ENCODE measurements at regions of chr7 and their contacts with region 1.

Region 1: GRCh38 chr7:107661081-107661864 is 645 bp downstream of the SLC26A4 start:
- DNase-seq: peak in 7 of 9 donors; percentile 12 to 60 (median 14)
- ATAC-seq: peak; percentile 66
- H3K4me3 ChIP-seq: peak overlapping the region; percentile 30
- H3K4me3 Mint-ChIP-seq: peak overlapping the region; percentile 56 to 96 (median 84)
- H3K27ac ChIP-seq: no peak overlapping the region
- H3K27ac Mint-ChIP-seq: peak overlapping the region in 1 of 9 donors; percentile 87
- H3K4me1 ChIP-seq: peaks cover 0 to 2% of the 10 kb centered on the region in 2 donors
- H3K4me1 Mint-ChIP-seq: peaks cover 12 to 44% (median 21%) of the 10 kb centered on the region in 7 donors
- H3K27me3 ChIP-seq: peaks cover 3 to 19% of the 10 kb centered on the region in 2 donors
- H3K27me3 Mint-ChIP-seq: peaks cover 0 to 67% (median 49%) of the 10 kb centered on the region in 5 donors

Region 2: DNA sequence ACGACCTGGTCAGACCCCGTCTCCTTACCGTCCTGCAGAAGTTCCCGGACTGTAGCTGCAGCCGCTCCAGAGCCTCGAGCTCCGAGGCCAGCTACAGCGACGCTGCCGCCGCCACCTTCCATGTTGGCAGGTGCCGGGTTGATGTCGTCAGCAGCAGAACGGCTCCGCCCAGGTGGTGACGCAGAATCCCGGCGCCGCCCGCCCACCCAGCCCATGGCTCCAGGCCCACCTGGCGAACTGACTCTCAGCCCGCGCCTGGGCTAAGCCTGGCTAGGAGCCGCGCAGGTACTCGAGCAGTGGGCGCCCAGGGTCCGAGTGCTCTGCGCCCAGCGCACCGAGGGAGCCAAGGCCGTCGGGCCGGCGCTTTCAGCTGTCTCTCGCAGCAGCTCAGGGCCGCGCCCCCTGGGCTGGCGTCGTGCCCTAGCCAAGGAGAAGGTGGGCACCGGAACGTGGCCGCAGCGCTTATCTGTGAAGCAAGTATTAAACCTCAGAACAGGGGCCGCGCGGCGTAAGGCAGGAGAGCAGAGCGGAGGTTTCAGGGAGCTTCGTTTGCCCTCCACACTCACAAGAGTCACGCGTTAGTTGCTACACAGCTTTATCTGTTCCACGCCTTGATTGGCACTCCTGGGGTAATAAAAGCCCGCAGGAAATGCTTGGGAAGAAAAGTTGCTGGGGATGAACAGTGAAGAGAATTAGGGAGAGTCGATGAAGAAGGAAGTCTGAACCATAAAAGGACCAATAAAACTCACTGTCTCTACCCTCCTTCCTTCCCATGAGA is 97.3 kb before region 1 on chr7 and contains the starts of genes COG5 and DUS4L:
- CTCF ChIA-PET with region 1: no interaction called
- POLR2A ChIA-PET with region 1: interaction called, 3 read pairs
- intact Hi-C with region 1: loop called in 1 of 2 experiments (anchors 1 kb)
- DNase-seq: peak; percentile 78 to 88 (median 84)
- ATAC-seq: peak; percentile 91
- H3K4me3 ChIP-seq: peak within 1 kb of the TSS; percentile 86
- H3K4me3 Mint-ChIP-seq: peak within 1 kb of the TSS; percentile 76 to 99 (median 91)
- H3K27ac ChIP-seq: peak within 1 kb of the TSS; percentile 98
- H3K27ac Mint-ChIP-seq: peak within 1 kb of the TSS; percentile 87 to 97 (median 93)
- H3K4me1 ChIP-seq: peaks cover 40 to 50% of the 10 kb centered on the region in 2 donors
- H3K4me1 Mint-ChIP-seq: peaks cover 40 to 76% (median 62%) of the 10 kb centered on the region in 7 donors
- H3K27me3 ChIP-seq: no peaks in the 10 kb centered on the region
- H3K27me3 Mint-ChIP-seq: no peaks in the 10 kb centered on the region
- total RNA-seq, gene COG5: 38.3 to 77.0 (median 60.7) TPM
- total RNA-seq, gene DUS4L: 10.0 to 14.1 (median 11.2) TPM

Region 3: GRCh38 chr7:107614425-107614824 is 46.8 kb before region 1 on chr7:
- CTCF ChIA-PET with region 1: no interaction called
- POLR2A ChIA-PET with region 1: no interaction called
- intact Hi-C with region 1: loop called in 1 of 2 experiments (anchors 2 kb)
- DNase-seq: no peak
- ATAC-seq: no peak
- H3K4me3 ChIP-seq: no peak overlapping the region
- H3K4me3 Mint-ChIP-seq: peak overlapping the region in 1 of 10 donors; percentile 69
- H3K27ac ChIP-seq: no peak overlapping the region
- H3K27ac Mint-ChIP-seq: no peak overlapping the region
- H3K4me1 ChIP-seq: no peaks in the 10 kb centered on the region
- H3K4me1 Mint-ChIP-seq: peaks cover 0 to 26% (median 0%) of the 10 kb centered on the region in 7 donors
- H3K27me3 ChIP-seq: no peaks in the 10 kb centered on the region
- H3K27me3 Mint-ChIP-seq: no peaks in the 10 kb centered on the region

Region 4: GRCh38 chr7:107638594-107638993 is 22.7 kb before region 1 on chr7:
- CTCF ChIA-PET with region 1: no interaction called
- POLR2A ChIA-PET with region 1: no interaction called
- intact Hi-C with region 1: loop called in 1 of 2 experiments (anchors 1 kb)
- DNase-seq: no peak
- ATAC-seq: no peak
- H3K4me3 ChIP-seq: no peak overlapping the region
- H3K4me3 Mint-ChIP-seq: peak overlapping the region in 1 of 10 donors; percentile 52
- H3K27ac ChIP-seq: no peak overlapping the region
- H3K27ac Mint-ChIP-seq: peak overlapping the region in 1 of 9 donors; percentile 45
- H3K4me1 ChIP-seq: no peaks in the 10 kb centered on the region
- H3K4me1 Mint-ChIP-seq: peaks cover 0 to 56% (median 0%) of the 10 kb centered on the region in 7 donors
- H3K27me3 ChIP-seq: no peaks in the 10 kb centered on the region
- H3K27me3 Mint-ChIP-seq: peaks cover 0 to 34% (median 9%) of the 10 kb centered on the region in 5 donors

Region 5: GRCh38 chr7:107725151-107725740 is 64.0 kb after region 1 on chr7:
- CTCF ChIA-PET with region 1: no interaction called
- POLR2A ChIA-PET with region 1: no interaction called
- intact Hi-C with region 1: loop called in 1 of 2 experiments (anchors 2 kb)
- DNase-seq: peak in 7 of 9 donors; percentile 23 to 56 (median 46)
- ATAC-seq: no peak
- H3K4me3 ChIP-seq: no peak overlapping the region
- H3K4me3 Mint-ChIP-seq: no peak overlapping the region
- H3K27ac ChIP-seq: no peak overlapping the region
- H3K27ac Mint-ChIP-seq: no peak overlapping the region
- H3K4me1 ChIP-seq: no peaks in the 10 kb centered on the region
- H3K4me1 Mint-ChIP-seq: no peaks in the 10 kb centered on the region
- H3K27me3 ChIP-seq: peaks cover 0 to 3% of the 10 kb centered on the region in 2 donors
- H3K27me3 Mint-ChIP-seq: peaks cover 9 to 29% (median 17%) of the 10 kb centered on the region in 5 donors

Measured in naive thymus-derived CD4-positive, alpha-beta T cell (primary cell).